Ascending aorta (tissue), 2 donors: ENCODE measurements at regions of chr7 and their contacts with region 1.

Region 1: DNA sequence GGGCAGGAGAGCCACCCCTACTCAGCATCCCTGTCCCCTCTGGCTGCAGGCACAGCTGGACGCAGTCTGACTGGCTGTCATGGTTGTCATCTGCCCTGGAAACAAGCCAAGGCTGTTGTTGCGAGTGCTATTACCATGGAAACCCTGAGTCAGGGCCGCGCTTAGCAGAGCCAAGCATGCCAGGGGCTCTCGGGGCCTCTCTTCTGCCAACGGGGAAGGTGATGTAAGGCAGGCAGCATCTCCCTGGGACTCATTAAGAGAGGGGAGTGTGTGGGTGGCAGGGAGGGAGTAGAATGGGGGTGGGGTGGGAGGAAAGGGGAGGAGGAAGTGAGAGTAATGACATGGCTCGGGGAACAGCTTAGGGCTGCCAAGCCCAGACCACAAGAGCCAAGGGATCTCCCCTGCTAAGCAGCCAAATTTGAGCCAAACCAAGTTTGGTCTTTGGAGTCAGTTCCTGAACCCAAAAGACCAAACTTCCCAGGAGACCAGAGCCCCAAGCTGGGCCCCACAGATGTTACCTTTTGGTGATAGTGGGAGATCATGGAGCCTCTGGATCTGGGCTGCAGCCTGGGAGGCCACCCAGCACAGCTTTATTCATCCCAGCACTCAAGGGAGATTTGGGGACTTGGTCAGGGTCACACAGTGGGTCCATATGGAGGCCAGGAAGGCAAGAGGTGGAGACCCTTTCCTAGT is 67.6 kb downstream of the TMEM130 start:
- DNase-seq: peak; percentile 79 to 95
- H3K4me3 ChIP-seq: no peak overlapping the region
- H3K27ac ChIP-seq: peak overlapping the region; percentile 49 to 59
- H3K4me1 ChIP-seq: peaks cover 7% of the 10 kb centered on the region in 2 donors
- H3K27me3 ChIP-seq: no peaks in the 10 kb centered on the region
- CTCF ChIP-seq: no peak

Region 2: GRCh38 chr7:98816241-98816640 is 14.0 kb after region 1 on chr7:
- intact Hi-C with region 1: loop called (anchors 1 kb)
- DNase-seq: peak; percentile 75 to 89
- H3K4me3 ChIP-seq: no peak overlapping the region
- H3K27ac ChIP-seq: peak overlapping the region; percentile 84 to 96
- H3K4me1 ChIP-seq: peaks cover 0 to 36% of the 10 kb centered on the region in 2 donors
- H3K27me3 ChIP-seq: no peaks in the 10 kb centered on the region
- CTCF ChIP-seq: no peak